MCF 10A (cell line): ENCODE measurements at regions of chr7 and their contacts with region 1.

Region 1: GRCh38 chr7:150898475-150899011 is 46.2 kb downstream of the AOC1 start:
- DNase-seq: peak; percentile 61
- H3K4me3 Mint-ChIP-seq: no peak overlapping the region
- H3K27ac Mint-ChIP-seq: no peak overlapping the region
- H3K4me1 Mint-ChIP-seq: peaks cover 14% of the 10 kb centered on the region
- H3K27me3 Mint-ChIP-seq: peaks cover 26% of the 10 kb centered on the region
- CTCF ChIP-seq: peak; percentile 86

Region 2: DNA sequence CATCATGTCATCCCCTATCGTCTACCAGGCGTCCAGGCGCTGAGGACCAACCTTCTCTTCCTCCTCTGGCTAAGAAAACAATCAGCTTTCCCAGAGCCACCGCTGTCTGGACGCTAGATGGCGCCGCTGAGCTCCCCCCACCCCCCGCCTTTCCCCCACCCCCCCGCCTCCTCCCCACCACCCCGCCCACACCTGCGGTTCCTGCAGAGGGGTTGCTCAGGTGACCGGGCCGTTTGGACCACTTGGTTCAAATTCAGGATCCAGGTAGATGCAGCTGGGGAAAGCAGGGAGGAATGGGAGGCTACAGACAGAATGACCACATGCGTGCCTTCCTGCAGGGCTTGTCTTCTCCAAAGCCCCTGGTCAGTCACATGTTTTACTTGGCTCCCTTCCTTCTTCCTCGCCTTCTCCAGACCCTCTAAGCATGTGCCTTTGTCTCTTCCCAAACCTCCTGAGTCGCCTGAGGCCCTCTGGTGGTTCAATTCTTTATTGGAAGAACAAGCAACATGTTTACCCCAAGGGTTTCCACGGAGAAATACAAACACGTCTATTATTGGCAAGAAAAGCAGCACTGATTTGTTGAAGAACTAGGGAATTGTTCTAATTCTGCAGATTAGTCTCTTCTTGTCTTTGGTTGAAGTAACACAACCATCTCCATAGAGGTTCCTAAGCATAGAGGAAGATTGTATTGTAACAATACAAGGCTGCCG is 21.6 kb before region 1 on chr7:
- CTCF ChIA-PET with region 1: interaction called, 15 read pairs
- POLR2A ChIA-PET with region 1: interaction called, 4 read pairs
- intact Hi-C with region 1: no loop called
- DNase-seq: peak; percentile 63
- H3K4me3 Mint-ChIP-seq: no peak overlapping the region
- H3K27ac Mint-ChIP-seq: no peak overlapping the region
- H3K4me1 Mint-ChIP-seq: peaks cover 12% of the 10 kb centered on the region
- H3K27me3 Mint-ChIP-seq: peaks cover 38% of the 10 kb centered on the region
- CTCF ChIP-seq: peak; percentile 16

Region 3: DNA sequence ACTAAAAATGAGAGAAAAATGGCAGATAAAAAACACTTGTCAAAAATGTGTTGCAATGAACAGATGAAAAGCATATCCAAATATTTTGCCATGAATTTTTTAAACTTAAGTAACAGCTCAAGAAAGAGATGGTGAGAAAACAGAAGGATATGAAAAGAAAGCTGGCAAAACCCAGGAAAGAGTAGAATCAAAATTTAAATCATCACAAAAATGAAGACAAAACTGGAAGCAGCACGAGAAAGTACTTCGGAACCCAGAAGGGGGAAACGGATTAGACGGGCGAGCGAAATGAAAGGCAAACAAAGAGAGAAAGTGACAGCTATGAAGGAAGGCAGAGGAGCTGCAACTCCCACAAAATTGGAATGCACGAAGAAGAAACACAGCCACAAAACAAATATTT is 19.4 kb after region 1 on chr7:
- CTCF ChIA-PET with region 1: interaction called, 23 read pairs
- POLR2A ChIA-PET with region 1: no interaction called
- intact Hi-C with region 1: no loop called
- DNase-seq: no peak
- H3K4me3 Mint-ChIP-seq: no peak overlapping the region
- H3K27ac Mint-ChIP-seq: no peak overlapping the region
- H3K4me1 Mint-ChIP-seq: no peaks in the 10 kb centered on the region
- H3K27me3 Mint-ChIP-seq: peaks cover 69% of the 10 kb centered on the region
- CTCF ChIP-seq: no peak

Region 4: GRCh38 chr7:150937848-150938561 is 39.5 kb after region 1 on chr7:
- CTCF ChIA-PET with region 1: interaction called, 22 read pairs
- POLR2A ChIA-PET with region 1: no interaction called
- intact Hi-C with region 1: no loop called
- DNase-seq: peak; percentile 55
- H3K4me3 Mint-ChIP-seq: peak overlapping the region; percentile 14
- H3K27ac Mint-ChIP-seq: no peak overlapping the region
- H3K4me1 Mint-ChIP-seq: peaks cover 11% of the 10 kb centered on the region
- H3K27me3 Mint-ChIP-seq: no peaks in the 10 kb centered on the region
- CTCF ChIP-seq: no peak

Region 5: GRCh38 chr7:150980663-150981062 is 82.1 kb after region 1 on chr7:
- CTCF ChIA-PET with region 1: interaction called, 43 read pairs
- POLR2A ChIA-PET with region 1: interaction called, 3 read pairs
- intact Hi-C with region 1: no loop called
- DNase-seq: no peak
- H3K4me3 Mint-ChIP-seq: no peak overlapping the region
- H3K27ac Mint-ChIP-seq: no peak overlapping the region
- H3K4me1 Mint-ChIP-seq: peaks cover 14% of the 10 kb centered on the region
- H3K27me3 Mint-ChIP-seq: peaks cover 66% of the 10 kb centered on the region
- CTCF ChIP-seq: no peak

Region 6: DNA sequence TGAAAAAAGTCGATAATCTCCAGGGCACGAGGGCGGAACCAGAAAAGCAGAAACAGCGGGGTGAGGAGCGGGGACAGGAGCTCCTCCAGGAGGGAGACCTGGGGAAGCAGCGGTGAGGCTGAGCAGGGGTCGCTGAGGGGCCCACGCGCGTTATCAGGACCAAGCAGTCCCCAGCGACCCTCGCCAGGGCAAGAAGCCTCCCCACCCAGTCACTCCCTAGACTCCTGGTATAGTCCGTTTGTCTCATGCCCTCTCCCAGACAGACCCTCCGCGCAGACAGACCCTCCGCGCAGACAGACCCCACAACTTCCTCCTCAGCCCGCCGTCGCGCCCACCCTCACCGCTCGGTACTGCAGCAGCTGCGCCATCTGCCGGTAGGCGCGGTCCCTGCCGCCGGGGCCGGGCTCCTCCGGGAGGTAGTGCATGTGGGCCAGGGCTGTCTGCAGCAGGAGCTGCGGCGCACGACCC is 119.4 kb after region 1 on chr7:
- CTCF ChIA-PET with region 1: interaction called, 16 read pairs
- POLR2A ChIA-PET with region 1: no interaction called
- intact Hi-C with region 1: no loop called
- DNase-seq: peak; percentile 23
- H3K4me3 Mint-ChIP-seq: peak overlapping the region; percentile 15
- H3K27ac Mint-ChIP-seq: no peak overlapping the region
- H3K4me1 Mint-ChIP-seq: peaks cover 10% of the 10 kb centered on the region
- H3K27me3 Mint-ChIP-seq: peaks cover 23% of the 10 kb centered on the region
- CTCF ChIP-seq: peak; percentile 85

Region 7: DNA sequence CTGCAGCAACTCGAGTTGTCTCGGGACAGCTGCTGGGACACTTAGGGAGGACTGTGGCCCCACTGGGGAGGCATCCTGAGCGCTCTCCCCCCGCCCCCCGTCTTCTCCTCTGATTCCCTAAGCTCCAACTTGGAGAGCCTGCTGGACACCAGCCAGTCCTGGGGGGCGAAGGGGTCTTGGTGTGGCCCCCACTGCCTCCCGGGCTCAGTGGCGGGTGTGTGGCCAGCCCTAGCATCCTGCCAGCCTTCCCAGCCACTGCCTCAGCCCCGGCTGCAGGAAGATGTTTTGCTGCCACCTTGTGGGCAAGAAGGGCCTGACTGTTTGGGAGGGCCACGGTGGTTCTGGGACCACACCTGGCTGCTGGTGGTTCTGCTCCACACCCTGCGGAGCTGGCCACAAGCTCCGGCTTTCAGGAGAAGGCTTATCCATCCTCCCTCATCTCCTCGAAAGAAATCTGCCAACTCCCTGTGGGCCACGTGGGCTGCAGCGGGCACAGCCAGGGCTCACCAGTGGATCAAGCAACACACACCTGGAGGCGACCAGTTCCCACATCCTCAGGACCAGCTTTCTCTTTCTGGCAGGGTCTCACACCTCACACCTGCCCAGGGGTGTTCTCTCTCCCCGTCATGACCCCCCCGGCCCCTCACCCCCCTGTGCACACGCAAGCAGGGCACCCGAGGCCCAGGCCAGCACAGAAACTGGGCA is 212.6 kb after region 1 on chr7:
- CTCF ChIA-PET with region 1: interaction called, 17 read pairs
- POLR2A ChIA-PET with region 1: interaction called, 5 read pairs
- intact Hi-C with region 1: loop called (anchors 1 kb)
- DNase-seq: peak; percentile 76
- H3K4me3 Mint-ChIP-seq: no peak overlapping the region
- H3K27ac Mint-ChIP-seq: no peak overlapping the region
- H3K4me1 Mint-ChIP-seq: peaks cover 25% of the 10 kb centered on the region
- H3K27me3 Mint-ChIP-seq: no peaks in the 10 kb centered on the region
- CTCF ChIP-seq: peak; percentile 90